Left cardiac atrium (tissue), 4 donors: ENCODE measurements at regions of chr21 and their contacts with region 1.

Region 1: GRCh38 chr21:38494703-38495102 is 3.6 kb downstream of the ERG start:
- DNase-seq: no peak
- ATAC-seq: peak in 1 of 2 donors; percentile 26

Region 2: GRCh38 chr21:38380481-38381137 is 114.1 kb before region 1 on chr21:
- intact Hi-C with region 1: loop called in 1 of 2 experiments (anchors 10 kb)
- DNase-seq: no peak
- ATAC-seq: no peak